OCI-LY7 (cell line): ENCODE measurements at regions of chr6 and their contacts with region 1.

Region 1: DNA sequence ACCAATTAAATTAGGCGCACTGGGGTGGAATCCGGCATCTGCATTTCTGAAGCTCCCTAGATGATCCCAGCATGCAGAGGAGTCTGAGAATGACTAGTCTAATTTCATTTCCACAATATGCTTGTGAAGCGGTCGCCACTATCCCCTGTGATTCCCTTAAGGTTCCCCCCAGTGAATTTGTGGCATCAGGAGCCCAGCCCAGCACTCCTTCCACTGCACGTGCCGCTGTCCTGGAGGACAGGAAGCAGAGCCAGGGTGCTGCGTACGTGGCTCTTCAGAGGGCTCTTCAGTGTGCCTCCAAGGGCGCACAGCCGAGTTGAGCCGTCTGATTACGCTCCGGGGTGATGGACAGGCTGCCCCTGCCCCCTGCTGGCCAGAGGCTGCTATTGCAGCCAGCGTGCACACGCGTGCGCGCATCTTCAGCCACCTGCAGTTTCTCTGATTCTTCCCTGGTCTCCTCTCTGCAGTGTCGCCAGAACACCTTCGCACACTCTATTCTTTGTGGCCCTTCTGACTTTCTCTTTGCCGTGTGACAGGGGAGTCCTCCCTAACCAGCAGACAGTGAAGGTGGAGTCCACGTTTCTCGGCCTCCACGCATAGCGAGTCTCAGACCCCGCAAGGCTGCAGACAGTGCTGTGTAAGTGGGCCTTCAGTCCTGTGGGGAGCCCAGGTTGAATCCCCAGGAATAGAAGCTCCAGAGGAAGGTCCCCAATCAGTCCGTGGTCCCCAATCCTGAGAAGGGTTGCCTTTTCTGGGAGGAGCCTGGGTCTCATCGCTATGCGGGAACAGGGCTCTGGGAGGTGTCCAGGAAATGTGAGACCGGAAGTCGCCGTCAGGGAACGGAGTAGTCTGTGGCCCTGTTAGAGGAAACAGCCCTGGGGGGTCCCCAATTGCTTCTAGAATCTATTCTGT is 16.5 kb upstream of the NCR2 start:
- DNase-seq: peak; percentile 86
- H3K4me3 ChIP-seq: peak overlapping the region; percentile 22
- H3K27ac ChIP-seq: no peak overlapping the region
- H3K4me1 ChIP-seq: peaks cover 7% of the 10 kb centered on the region
- CTCF ChIP-seq: peak; percentile 96

Region 2: DNA sequence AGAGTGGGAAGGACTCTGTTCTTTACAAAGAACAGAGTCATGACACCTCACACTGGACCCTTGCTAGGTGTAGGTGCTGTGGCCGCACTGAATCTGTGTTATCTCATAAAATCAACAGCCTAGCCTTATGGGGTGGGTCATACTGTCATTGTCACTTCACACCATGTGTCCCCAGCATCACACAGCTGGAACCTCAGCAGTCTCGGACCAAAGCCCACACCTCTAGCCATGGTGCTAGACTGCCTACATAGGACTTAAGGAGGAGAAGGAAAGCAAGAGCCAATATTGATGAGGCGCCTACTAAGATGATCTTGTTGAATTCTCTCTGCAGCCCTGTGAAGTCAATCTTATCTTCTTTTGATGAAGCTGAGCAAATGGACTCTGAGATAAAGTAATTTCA is 310.9 kb before region 1 on chr6:
- CTCF ChIA-PET with region 1: no interaction called
- POLR2A ChIA-PET with region 1: no interaction called
- intact Hi-C with region 1: loop called (anchors 5 kb)
- DNase-seq: no peak
- H3K4me3 ChIP-seq: no peak overlapping the region
- H3K27ac ChIP-seq: no peak overlapping the region
- H3K4me1 ChIP-seq: no peaks in the 10 kb centered on the region
- CTCF ChIP-seq: no peak

Region 3: DNA sequence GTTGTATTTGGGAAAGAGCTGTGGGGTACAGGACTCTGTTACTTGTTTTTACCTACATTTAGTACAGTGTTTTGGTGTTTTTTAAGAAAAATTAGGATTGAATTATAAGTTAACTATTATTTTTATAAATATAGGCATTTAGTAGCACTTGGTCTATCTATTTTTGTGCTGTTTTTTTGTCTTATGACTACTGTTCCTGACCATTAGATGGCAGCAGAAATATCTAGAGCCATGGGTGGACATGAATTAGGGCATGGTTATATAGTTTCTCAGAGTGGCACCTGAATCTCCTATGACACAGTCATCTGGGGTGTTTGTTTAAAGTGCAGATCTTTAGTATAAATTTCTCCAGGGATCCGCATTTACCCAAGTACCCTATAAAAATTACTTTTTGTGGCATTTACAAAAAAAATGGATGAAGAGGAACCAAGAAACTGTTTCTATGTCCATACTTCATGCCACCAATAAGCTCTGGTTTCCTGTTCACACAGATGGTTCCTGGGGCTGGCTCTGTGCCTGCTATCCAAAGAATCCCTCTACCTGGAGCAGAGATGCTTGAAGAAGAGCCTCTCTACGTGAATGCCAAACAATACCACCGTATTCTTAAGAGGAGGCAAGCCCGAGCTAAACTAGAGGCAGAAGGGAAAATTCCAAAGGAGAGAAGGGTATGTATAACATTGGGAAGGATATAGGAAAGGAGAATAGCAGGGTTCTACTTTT is 226.3 kb before region 1 on chr6:
- CTCF ChIA-PET with region 1: no interaction called
- POLR2A ChIA-PET with region 1: no interaction called
- intact Hi-C with region 1: loop called (anchors 2 kb)
- DNase-seq: peak; percentile 36
- H3K4me3 ChIP-seq: no peak overlapping the region
- H3K27ac ChIP-seq: no peak overlapping the region
- H3K4me1 ChIP-seq: no peaks in the 10 kb centered on the region
- CTCF ChIP-seq: peak; percentile 77

Region 4: GRCh38 chr6:41200296-41200900 is 118.5 kb before region 1 on chr6:
- CTCF ChIA-PET with region 1: no interaction called
- POLR2A ChIA-PET with region 1: no interaction called
- intact Hi-C with region 1: loop called (anchors 5 kb)
- DNase-seq: peak; percentile 73
- H3K4me3 ChIP-seq: peak overlapping the region; percentile 65
- H3K27ac ChIP-seq: peak overlapping the region; percentile 95
- H3K4me1 ChIP-seq: peaks cover 49% of the 10 kb centered on the region
- CTCF ChIP-seq: no peak

Region 5: GRCh38 chr6:41278699-41279405 is 40.1 kb before region 1 on chr6:
- CTCF ChIA-PET with region 1: no interaction called
- POLR2A ChIA-PET with region 1: interaction called, 3 read pairs
- intact Hi-C with region 1: loop called (anchors 1 kb)
- DNase-seq: peak; percentile 72
- H3K4me3 ChIP-seq: no peak overlapping the region
- H3K27ac ChIP-seq: no peak overlapping the region
- H3K4me1 ChIP-seq: no peaks in the 10 kb centered on the region
- CTCF ChIP-seq: peak; percentile 80